Esophagus muscularis mucosa (tissue), 4 donors: ENCODE measurements at regions of chr5 and their contacts with region 1.

Region 1: DNA sequence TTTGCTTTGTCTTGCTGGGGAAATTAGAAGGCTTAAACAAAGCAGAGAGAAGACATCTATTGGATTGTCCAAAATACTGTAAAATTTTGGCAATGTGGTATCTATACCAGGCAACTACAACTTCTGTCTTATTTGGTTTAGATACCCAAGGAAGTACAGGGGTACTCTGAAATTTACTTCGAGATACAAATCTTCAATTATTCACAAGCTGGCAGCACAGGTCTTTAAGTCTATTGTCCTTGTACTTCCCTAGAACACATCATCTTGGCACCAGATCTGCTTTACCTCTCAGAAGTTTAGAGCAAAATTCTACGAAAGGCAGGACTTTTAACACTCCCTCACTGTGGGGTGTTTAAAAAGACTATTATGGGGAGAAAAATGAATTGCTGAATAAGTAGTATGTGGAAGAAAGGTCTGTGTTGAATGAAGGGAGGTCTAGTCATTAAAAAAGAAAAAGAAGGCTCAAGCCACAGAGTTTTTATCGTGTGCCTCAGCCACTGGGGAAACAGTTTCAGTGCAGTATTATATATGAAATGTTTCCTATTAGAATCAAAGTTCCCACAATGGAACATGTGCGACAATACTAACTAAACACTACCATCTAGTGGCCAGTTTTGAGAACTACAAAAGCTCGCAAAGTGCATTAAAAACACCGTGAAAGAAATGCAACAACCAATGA is 93.7 kb downstream of the PDE4D start:
- DNase-seq: no peak
- H3K4me3 ChIP-seq: peak overlapping the region in 2 of 4 donors; percentile 5 to 6
- H3K27ac ChIP-seq: peak overlapping the region in 1 of 4 donors; percentile 6
- H3K4me1 ChIP-seq: peaks cover 3 to 22% (median 10%) of the 10 kb centered on the region in 4 donors
- H3K27me3 ChIP-seq: no peaks in the 10 kb centered on the region
- CTCF ChIP-seq: peak; percentile 80 to 86 (median 80)
- EP300 ChIP-seq: no peak
- POLR2A ChIP-seq: no peak

Region 2: GRCh38 chr5:59390074-59390659 is 409.6 kb before region 1 on chr5:
- intact Hi-C with region 1: loop called (anchors 2 kb)
- DNase-seq: no peak
- H3K4me3 ChIP-seq: no peak overlapping the region
- H3K27ac ChIP-seq: no peak overlapping the region
- H3K4me1 ChIP-seq: no peaks in the 10 kb centered on the region
- H3K27me3 ChIP-seq: no peaks in the 10 kb centered on the region
- CTCF ChIP-seq: peak; percentile 56 to 74 (median 70)
- EP300 ChIP-seq: no peak
- POLR2A ChIP-seq: no peak

Region 3: GRCh38 chr5:59506285-59506877 is 293.4 kb before region 1 on chr5:
- intact Hi-C with region 1: loop called (anchors 5 kb)
- DNase-seq: no peak
- H3K4me3 ChIP-seq: no peak overlapping the region
- H3K27ac ChIP-seq: no peak overlapping the region
- H3K4me1 ChIP-seq: no peaks in the 10 kb centered on the region
- H3K27me3 ChIP-seq: no peaks in the 10 kb centered on the region
- CTCF ChIP-seq: peak in 1 of 3 experiments; percentile 42
- EP300 ChIP-seq: no peak
- POLR2A ChIP-seq: no peak